ENCODE measurements at regions of chr19 and their contacts with region 1.

Region 1: GRCh38 chr19:13104360-13104847 is 1.7 kb upstream of the LYL1 start:
- DNase-seq: no peak
- H3K4me3 ChIP-seq: no peak overlapping the region
- H3K27ac ChIP-seq: no peak overlapping the region
- H3K27me3 ChIP-seq: no peaks in the 10 kb centered on the region
- CTCF ChIP-seq: peak; percentile 67

Region 2: GRCh38 chr19:12983542-12984142 is 120.8 kb before region 1 on chr19:
- CTCF ChIA-PET with region 1: interaction called, 12 read pairs
- POLR2A ChIA-PET with region 1: no interaction called
- DNase-seq: peak; percentile 30
- H3K4me3 ChIP-seq: peak overlapping the region; percentile 50
- H3K27ac ChIP-seq: no peak overlapping the region
- H3K27me3 ChIP-seq: no peaks in the 10 kb centered on the region
- CTCF ChIP-seq: peak; percentile 76

Region 3: GRCh38 chr19:13022859-13023636 is 81.4 kb before region 1 on chr19:
- CTCF ChIA-PET with region 1: no interaction called
- POLR2A ChIA-PET with region 1: interaction called, 12 read pairs
- DNase-seq: peak; percentile 92
- H3K4me3 ChIP-seq: peak overlapping the region; percentile 65
- H3K27ac ChIP-seq: peak overlapping the region; percentile 99
- H3K27me3 ChIP-seq: no peaks in the 10 kb centered on the region
- CTCF ChIP-seq: no peak

Region 4: GRCh38 chr19:13117772-13118423 is 13.5 kb after region 1 on chr19 and contains the start of gene NACC1:
- CTCF ChIA-PET with region 1: interaction called, 12 read pairs
- POLR2A ChIA-PET with region 1: interaction called, 3 read pairs
- DNase-seq: no peak
- H3K4me3 ChIP-seq: peak within 1 kb of the TSS; percentile 98
- H3K27ac ChIP-seq: peak within 1 kb of the TSS; percentile 61
- H3K27me3 ChIP-seq: no peaks in the 10 kb centered on the region
- CTCF ChIP-seq: no peak
- polyA plus RNA-seq, gene NACC1: 43.4 and 76.4 TPM in 2 replicates

Region 5: DNA sequence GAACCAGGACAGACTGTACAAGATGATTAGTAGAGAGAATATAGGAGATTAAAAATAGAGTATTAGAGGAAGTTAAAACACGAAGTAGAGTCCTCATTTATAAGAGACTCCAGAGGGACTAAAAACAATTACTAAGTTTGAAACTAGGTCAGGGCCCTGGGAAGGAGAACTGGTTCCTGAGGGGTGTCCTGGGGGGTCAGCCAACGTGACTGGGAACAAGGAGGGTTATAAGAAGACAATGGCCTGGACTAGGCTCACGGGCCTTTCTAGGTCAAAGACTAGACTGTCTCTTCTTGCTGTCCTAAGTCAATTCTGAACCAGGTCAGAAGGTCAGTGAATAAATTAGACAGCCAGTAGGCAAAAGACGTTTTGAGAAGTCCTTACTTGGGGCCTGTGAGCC is 211.1 kb after region 1 on chr19:
- CTCF ChIA-PET with region 1: no interaction called
- POLR2A ChIA-PET with region 1: no interaction called
- DNase-seq: no peak
- H3K4me3 ChIP-seq: no peak overlapping the region
- H3K27ac ChIP-seq: no peak overlapping the region
- H3K27me3 ChIP-seq: no peaks in the 10 kb centered on the region
- CTCF ChIP-seq: no peak